PC-9 (cell line): ENCODE measurements at regions of chr17 and their contacts with region 1.

Region 1: GRCh38 chr17:59106463-59107305 is at the start of gene TRIM37:
- DNase-seq: peak; percentile 98 to 99
- H3K4me3 ChIP-seq: peak within 1 kb of the TSS; percentile 73
- H3K27ac ChIP-seq: peak within 1 kb of the TSS; percentile 73
- H3K4me1 ChIP-seq: peaks cover 26% of the 10 kb centered on the region
- H3K27me3 ChIP-seq: no peaks in the 10 kb centered on the region
- CTCF ChIP-seq: no peak
- total RNA-seq, gene TRIM37: 21.6 and 24.6 TPM in 2 replicates

Region 2: GRCh38 chr17:59093702-59094231 is 12.9 kb before region 1 on chr17:
- CTCF ChIA-PET with region 1: no interaction called
- POLR2A ChIA-PET with region 1: interaction called, 5 read pairs
- intact Hi-C with region 1: loop called (anchors 2 kb)
- DNase-seq: peak; percentile 72 to 84
- H3K4me3 ChIP-seq: no peak overlapping the region
- H3K27ac ChIP-seq: peak overlapping the region; percentile 66
- H3K4me1 ChIP-seq: peaks cover 29% of the 10 kb centered on the region
- H3K27me3 ChIP-seq: no peaks in the 10 kb centered on the region
- CTCF ChIP-seq: no peak

Region 3: GRCh38 chr17:59124665-59125064 is 18.0 kb after region 1 on chr17:
- CTCF ChIA-PET with region 1: no interaction called
- POLR2A ChIA-PET with region 1: interaction called, 13 read pairs
- intact Hi-C with region 1: no loop called
- DNase-seq: no peak
- H3K4me3 ChIP-seq: no peak overlapping the region
- H3K27ac ChIP-seq: no peak overlapping the region
- H3K4me1 ChIP-seq: no peaks in the 10 kb centered on the region
- H3K27me3 ChIP-seq: no peaks in the 10 kb centered on the region
- CTCF ChIP-seq: no peak

Region 4: GRCh38 chr17:59155439-59156182 is 48.9 kb after region 1 on chr17 and contains the start of gene PRR11:
- CTCF ChIA-PET with region 1: no interaction called
- POLR2A ChIA-PET with region 1: interaction called, 3 read pairs
- intact Hi-C with region 1: loop called (anchors 1 kb)
- DNase-seq: peak; percentile 94 to 100
- H3K4me3 ChIP-seq: peak within 1 kb of the TSS; percentile 80
- H3K27ac ChIP-seq: peak within 1 kb of the TSS; percentile 71
- H3K4me1 ChIP-seq: peaks cover 50% of the 10 kb centered on the region
- H3K27me3 ChIP-seq: no peaks in the 10 kb centered on the region
- CTCF ChIP-seq: no peak
- total RNA-seq, gene PRR11: 87.9 and 109 TPM in 2 replicates